ENCODE measurements at regions of chr5 and their contacts with region 1.

Region 1: DNA sequence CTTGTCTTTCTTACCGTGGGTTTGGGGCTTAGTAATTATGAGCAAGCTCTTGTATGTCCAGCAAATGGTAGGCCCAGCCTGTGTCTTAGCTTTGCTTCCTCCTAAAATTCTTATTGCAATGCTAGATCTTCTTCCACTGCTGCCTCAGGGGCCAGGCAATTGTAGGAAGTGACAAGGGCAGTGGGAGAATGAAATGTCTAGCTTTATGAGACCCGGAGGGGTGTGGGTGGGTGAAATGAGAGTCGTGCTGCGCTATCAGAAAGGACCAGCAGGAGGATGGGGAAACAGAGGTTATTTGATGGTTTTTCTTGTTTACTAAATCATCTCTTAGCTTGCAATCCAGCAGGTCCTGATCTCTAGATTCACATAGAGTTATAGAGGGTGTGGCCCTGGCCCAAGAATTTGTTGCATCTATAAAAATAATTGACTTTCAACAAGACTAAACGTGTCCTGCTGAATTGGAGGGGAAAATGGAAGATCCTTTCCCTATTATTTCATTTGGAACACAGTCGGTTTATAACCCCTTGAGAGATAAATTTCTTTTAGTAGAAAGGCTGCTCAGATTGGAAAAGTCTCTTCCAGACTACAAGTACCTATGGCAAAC is 43.7 kb downstream of the ZNF366 start:
- DNase-seq: no peak
- ATAC-seq: peak; percentile 67
- H3K4me3 Mint-ChIP-seq: no peak overlapping the region
- H3K27ac Mint-ChIP-seq: no peak overlapping the region
- H3K4me1 Mint-ChIP-seq: no peaks in the 10 kb centered on the region
- H3K27me3 Mint-ChIP-seq: no peaks in the 10 kb centered on the region
- CTCF ChIP-seq: no peak

Region 2: GRCh38 chr5:72451741-72452505 is 11.6 kb before region 1 on chr5:
- CTCF ChIA-PET with region 1: interaction called, 13 read pairs
- POLR2A ChIA-PET with region 1: no interaction called
- DNase-seq: no peak
- ATAC-seq: no peak; the same call in none of the 2 replicates
- H3K4me3 Mint-ChIP-seq: no peak overlapping the region
- H3K27ac Mint-ChIP-seq: no peak overlapping the region
- H3K4me1 Mint-ChIP-seq: peaks cover 10% of the 10 kb centered on the region
- H3K27me3 Mint-ChIP-seq: peaks cover 3% of the 10 kb centered on the region; the same call in 1 of the 2 replicates
- CTCF ChIP-seq: no peak

Measured in WTC11 (cell line).